Heart right ventricle (tissue), 16 donors: ENCODE measurements at regions of chr9 and their contacts with region 1.

Region 1: GRCh38 chr9:83473488-83473971 is 64.7 kb downstream of the FRMD3 start:
- DNase-seq: no peak
- ATAC-seq: peak in 3 of 8 donors; percentile 31 to 43 (median 43)
- H3K4me3 ChIP-seq: peak overlapping the region in 6 of 10 donors; percentile 16 to 31 (median 23)
- H3K27ac ChIP-seq: peak overlapping the region in 9 of 10 donors; percentile 25 to 85 (median 74)
- H3K4me1 ChIP-seq: peaks cover 0 to 52% (median 35%) of the 10 kb centered on the region in 9 donors
- H3K27me3 ChIP-seq: no peaks in the 10 kb centered on the region
- CTCF ChIP-seq: no peak

Region 2: DNA sequence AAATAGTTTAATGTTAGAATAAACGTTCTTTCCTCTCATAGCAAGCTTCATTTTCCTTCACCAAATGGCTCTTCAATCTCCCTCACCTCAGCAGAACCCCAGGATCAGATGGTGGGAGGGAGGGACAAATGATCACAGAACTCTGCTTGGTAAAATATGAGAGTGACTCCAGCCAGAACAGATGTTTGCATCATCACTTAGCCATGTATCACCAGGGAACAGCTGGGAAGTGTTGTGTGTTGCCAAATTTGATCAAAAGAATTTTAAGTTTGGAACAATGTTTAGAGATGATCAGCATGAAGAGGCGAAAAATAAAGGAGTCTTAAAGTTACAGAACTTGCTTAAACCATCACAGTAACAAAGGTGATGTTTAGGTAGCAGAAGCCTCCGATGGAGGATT is 51.0 kb before region 1 on chr9:
- intact Hi-C with region 1: loop called in 1 of 10 experiments (anchors 10 kb)
- DNase-seq: peak in 1 of 2 donors; percentile 26
- ATAC-seq: peak in 7 of 8 donors; percentile 62 to 88 (median 71)
- H3K4me3 ChIP-seq: no peak overlapping the region
- H3K27ac ChIP-seq: peak overlapping the region in 3 of 10 donors; percentile 0 to 30 (median 6)
- H3K4me1 ChIP-seq: peaks cover 0 to 47% (median 13%) of the 10 kb centered on the region in 9 donors
- H3K27me3 ChIP-seq: no peaks in the 10 kb centered on the region
- CTCF ChIP-seq: no peak

Region 3: DNA sequence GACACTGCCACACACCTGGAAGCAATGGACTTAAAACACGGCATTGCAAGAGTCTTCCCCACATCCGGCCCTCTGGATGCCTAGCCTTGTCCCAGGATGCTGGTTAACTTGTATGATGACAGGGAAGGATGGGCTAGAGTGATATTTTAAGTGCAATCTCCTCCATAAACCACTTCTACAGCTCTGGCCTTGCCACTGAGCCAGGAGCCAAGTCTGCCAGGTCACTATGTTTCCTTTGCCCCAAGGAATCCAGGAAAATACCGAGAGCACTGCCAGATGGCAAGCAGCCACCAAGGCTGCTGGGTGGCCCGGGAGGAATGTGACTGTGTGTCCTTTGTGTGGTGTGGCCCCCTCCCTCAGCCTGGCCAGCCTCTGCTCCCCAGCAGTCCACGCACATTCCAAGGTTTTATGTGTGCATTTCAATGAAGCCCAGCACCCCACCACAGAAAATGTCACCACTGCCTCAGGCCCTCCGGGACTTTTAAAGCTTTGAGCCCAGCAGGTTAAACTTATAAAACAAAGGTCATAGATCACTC is 41.4 kb before region 1 on chr9:
- intact Hi-C with region 1: loop called in 4 of 10 experiments (anchors 2 to 10 kb)
- DNase-seq: peak; percentile 69 to 81
- ATAC-seq: peak; percentile 59 to 95 (median 87)
- H3K4me3 ChIP-seq: no peak overlapping the region
- H3K27ac ChIP-seq: peak overlapping the region in 8 of 10 donors; percentile 7 to 70 (median 38)
- H3K4me1 ChIP-seq: peaks cover 10 to 48% (median 32%) of the 10 kb centered on the region in 9 donors
- H3K27me3 ChIP-seq: no peaks in the 10 kb centered on the region
- CTCF ChIP-seq: no peak

Region 4: DNA sequence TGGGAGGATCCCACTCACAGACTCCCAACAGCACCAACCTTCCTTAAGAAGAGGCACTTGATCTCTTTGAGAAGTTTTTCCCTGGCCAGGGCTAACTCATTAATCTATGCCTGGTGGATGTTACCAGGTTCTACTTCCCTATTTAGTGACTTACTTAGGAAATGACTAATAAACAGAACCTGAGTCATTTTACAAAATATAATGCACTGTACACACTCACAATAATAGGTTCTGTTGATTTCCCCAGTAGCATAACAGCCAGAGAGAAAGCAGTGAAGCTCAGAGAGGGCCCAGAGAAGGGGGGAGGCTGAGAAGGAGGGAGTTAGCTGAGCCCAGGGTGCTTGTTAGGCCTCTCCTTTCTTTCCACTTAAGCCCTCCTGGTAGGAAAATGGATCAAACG is 37.5 kb after region 1 on chr9:
- intact Hi-C with region 1: loop called in 1 of 10 experiments (anchors 5 kb)
- DNase-seq: no peak
- ATAC-seq: peak in 3 of 8 donors; percentile 16 to 71 (median 49)
- H3K4me3 ChIP-seq: no peak overlapping the region
- H3K27ac ChIP-seq: peak overlapping the region in 3 of 10 donors; percentile 23 to 59 (median 36)
- H3K4me1 ChIP-seq: peaks cover 4 to 60% (median 29%) of the 10 kb centered on the region in 9 donors
- H3K27me3 ChIP-seq: no peaks in the 10 kb centered on the region
- CTCF ChIP-seq: no peak